Activated naive CD4-positive, alpha-beta T cell treated with anti-CD3 and anti-CD28 coated beads for 36 hours (primary cell): ENCODE measurements at regions of chr10 and their contacts with region 1.

Region 1: GRCh38 chr10:77165445-77166208 is 472.0 kb downstream of the KCNMA1 start:
- DNase-seq: peak; percentile 60
- H3K4me3 Mint-ChIP-seq: peak overlapping the region; percentile 34
- H3K27ac Mint-ChIP-seq: no peak overlapping the region
- H3K4me1 Mint-ChIP-seq: peaks cover 3% of the 10 kb centered on the region
- H3K27me3 Mint-ChIP-seq: peaks cover 31% of the 10 kb centered on the region

Region 2: DNA sequence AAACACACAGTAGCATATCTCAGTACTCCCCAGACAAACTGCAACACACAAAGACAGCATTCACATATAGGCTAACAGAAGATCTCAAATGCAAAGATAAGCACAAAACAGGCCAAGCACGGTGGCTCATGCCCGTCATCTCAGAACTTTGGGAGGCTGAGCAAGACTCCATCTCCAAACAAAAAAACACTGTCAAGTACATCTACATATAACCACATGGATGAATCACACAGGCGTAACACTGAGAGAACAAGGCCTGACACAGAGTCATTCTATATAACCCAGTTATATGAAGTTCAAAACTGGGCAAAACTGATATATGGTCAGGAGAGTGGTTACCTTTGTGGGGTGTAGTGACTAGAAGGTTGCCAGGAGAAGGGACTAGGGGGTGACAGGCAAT is 34.4 kb before region 1 on chr10:
- CTCF ChIA-PET with region 1: no interaction called
- intact Hi-C with region 1: no loop called
- DNase-seq: no peak
- H3K4me3 Mint-ChIP-seq: no peak overlapping the region
- H3K27ac Mint-ChIP-seq: no peak overlapping the region
- H3K4me1 Mint-ChIP-seq: no peaks in the 10 kb centered on the region
- H3K27me3 Mint-ChIP-seq: peaks cover 12% of the 10 kb centered on the region

Region 3: DNA sequence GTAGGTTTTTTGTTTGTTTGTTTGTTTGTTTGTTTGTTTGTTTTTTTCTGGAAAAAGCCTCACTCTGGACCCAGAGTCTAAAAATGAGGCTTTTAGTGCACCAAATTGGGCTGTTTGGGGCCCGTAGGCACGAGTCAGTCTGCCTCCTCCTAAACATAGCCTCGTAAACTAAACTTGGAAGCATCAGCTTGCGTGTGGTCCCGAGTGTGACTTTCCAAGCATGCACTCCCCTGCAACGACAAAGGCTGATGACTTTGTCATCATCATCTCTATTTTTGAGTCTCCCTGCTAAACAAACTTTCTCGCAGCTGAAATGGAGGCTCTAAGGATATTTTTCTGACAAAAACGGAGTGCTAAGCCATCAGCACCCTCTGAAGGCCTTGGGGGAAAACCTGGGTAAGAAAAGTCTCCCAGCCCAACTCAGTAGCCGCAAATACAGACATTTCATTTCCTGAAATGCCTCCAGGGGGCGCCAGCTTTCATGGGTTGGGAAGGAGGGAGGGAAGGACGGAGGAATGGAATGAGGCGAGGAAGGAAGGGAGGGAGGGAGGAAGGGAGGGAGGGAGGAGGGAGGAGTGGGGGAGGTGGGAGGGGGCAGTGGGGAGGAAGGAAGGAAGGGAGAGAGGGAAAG is 226.1 kb after region 1 on chr10:
- CTCF ChIA-PET with region 1: no interaction called
- intact Hi-C with region 1: loop called (anchors 5 kb)
- DNase-seq: peak; percentile 47
- H3K4me3 Mint-ChIP-seq: no peak overlapping the region
- H3K27ac Mint-ChIP-seq: no peak overlapping the region
- H3K4me1 Mint-ChIP-seq: peaks cover 2% of the 10 kb centered on the region
- H3K27me3 Mint-ChIP-seq: peaks cover 7% of the 10 kb centered on the region

Region 4: GRCh38 chr10:78953113-78953798 is 1787.6 kb after region 1 on chr10:
- CTCF ChIA-PET with region 1: no interaction called
- intact Hi-C with region 1: no loop called
- DNase-seq: no peak
- H3K4me3 Mint-ChIP-seq: no peak overlapping the region
- H3K27ac Mint-ChIP-seq: no peak overlapping the region
- H3K4me1 Mint-ChIP-seq: no peaks in the 10 kb centered on the region
- H3K27me3 Mint-ChIP-seq: no peaks in the 10 kb centered on the region